ENCODE measurements at regions of chr17 and their contacts with region 1.

Region 1: GRCh38 chr17:18183334-18184142 is at the start of gene ALKBH5:
- DNase-seq: peak; percentile 96 to 99 (median 97)

Region 2: DNA sequence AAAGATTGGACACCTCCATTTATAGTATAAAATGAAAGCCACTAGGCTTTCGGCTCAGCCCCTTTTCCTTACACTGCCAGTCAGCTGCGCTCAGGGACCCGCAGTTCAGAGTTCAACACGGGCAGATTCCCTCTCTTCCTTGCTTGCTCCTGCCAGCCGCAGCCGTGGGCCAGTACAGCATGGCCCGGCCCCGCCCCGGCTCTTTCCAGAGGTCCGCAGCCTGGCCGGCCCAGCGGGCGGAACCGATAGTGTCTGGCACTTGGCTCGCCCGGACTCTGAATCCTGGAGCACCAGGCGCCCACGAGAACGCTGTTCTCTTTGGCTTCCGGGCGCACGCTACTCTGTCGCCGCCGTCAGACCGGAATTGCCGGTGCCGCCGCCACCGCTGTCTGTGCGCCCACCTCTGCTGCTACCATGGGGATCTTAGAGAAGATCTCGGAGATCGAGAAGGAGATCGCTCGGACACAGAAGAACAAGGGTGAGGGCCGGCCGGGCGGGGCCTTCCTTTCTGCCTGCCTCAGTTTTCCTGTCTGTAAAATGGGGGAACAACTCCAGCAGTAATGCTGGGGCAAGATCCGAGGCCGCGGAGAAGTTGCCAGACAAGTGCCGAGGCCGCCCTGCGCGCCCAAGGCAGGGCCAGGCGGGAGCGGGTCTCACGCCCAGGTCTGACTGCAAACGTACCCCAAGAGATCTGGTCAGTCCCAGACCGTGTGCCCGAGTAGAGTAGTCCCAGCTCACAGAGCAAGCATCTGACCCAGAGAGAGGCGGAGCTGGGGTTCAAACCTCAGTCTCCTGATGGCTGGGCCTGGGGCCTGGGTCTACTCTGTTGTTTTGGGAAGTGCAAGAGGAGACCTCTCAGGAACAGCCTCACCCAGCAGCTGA is 95.7 kb before region 1 on chr17 and contains the start of gene DRG2:
- intact Hi-C with region 1: loop called (anchors 5 kb)
- DNase-seq: peak; percentile 84 to 98 (median 90)

Measured in posterior cingulate gyrus (tissue), 11 donors.